Endothelial cell of umbilical vein (primary cell): ENCODE measurements at regions of chr3 and their contacts with region 1.

Region 1: DNA sequence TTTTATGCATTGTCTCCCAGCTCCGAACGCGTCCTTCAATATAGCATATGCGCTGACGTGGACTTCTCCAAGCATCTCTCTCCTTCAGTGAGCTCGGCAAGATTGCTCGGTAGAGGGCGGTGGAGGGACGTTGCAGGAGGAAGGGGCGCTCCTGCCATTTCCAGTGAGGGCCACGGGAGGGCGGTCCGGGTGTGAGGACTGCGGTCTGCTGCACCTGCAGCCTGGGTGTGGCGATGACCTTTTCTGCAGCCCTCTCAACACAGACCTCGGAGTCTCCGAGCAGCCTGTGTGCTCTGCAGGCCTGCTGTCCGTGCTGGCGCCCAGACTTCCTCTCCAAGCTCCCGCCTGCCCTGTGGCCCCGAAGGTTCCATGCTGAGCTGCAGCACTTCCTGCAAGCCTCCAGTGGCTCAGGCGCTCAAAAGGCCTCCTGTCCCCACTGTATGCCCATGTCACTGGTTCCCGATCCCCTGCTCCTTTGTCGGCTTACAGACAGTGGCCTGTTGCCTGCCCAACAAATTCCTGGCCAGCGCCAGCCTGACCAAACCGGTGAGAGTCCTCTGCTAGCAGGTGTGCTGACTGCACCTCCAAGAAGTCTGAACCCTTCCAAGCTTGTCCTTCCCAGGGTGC is 8.9 kb upstream of the RTP3 start:
- DNase-seq: peak; percentile 84
- H3K4me3 ChIP-seq: no peak overlapping the region
- H3K27ac ChIP-seq: no peak overlapping the region
- H3K4me1 ChIP-seq: peaks cover 2% of the 10 kb centered on the region
- H3K27me3 ChIP-seq: peaks cover 2 to 7% of the 10 kb centered on the region in 2 experiments
- CTCF ChIP-seq: peak; percentile 99 to 100
- POLR2A ChIP-seq: no peak

Region 2: DNA sequence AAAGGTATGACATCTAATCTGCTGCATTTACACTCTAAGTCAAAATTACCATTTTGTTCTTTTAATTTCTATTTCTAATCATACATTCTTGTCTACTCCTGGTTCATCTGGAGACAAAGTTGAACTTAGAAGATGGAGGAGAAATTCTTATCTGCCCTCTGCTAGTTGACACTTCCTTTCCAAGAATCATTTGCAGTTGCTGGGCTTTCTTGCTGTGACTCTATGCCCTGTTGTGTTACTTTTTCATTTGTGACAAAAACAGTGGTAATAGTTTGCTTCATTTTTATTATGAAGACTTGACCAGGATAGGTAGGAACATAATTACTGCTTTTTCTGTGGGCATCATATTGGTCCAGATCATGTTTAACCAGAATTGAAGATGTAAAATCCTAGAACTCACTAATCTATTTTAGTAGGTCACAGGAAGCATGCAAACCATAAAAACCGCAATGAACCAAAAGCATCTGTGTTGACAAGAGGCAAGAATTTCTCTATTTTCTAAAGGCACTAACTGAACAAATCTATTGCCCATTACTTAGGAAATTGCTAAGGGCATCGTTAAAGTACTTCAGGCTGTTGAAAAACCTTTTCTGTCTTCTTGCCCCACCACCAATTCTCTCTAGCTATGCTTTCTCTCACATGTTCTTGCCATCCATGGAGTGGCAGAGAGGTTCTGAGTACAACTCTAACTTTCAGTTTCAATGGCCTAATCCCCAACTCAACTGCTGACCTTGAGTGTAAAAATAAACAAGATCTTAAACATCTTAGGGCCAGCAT is 139.2 kb before region 1 on chr3:
- CTCF ChIA-PET with region 1: no interaction called
- POLR2A ChIA-PET with region 1: no interaction called
- dilution Hi-C with region 1: no loop called
- intact Hi-C with region 1: no loop called
- DNase-seq: no peak
- H3K4me3 ChIP-seq: no peak overlapping the region
- H3K27ac ChIP-seq: no peak overlapping the region
- H3K4me1 ChIP-seq: no peaks in the 10 kb centered on the region
- H3K27me3 ChIP-seq: peaks cover 4 to 8% of the 10 kb centered on the region in 2 experiments
- CTCF ChIP-seq: no peak
- POLR2A ChIP-seq: no peak

Region 3: GRCh38 chr3:46449755-46450552 is 38.9 kb before region 1 on chr3:
- CTCF ChIA-PET with region 1: interaction called, 15 read pairs
- POLR2A ChIA-PET with region 1: no interaction called
- dilution Hi-C with region 1: no loop called
- intact Hi-C with region 1: no loop called
- DNase-seq: no peak
- H3K4me3 ChIP-seq: no peak overlapping the region
- H3K27ac ChIP-seq: no peak overlapping the region
- H3K4me1 ChIP-seq: no peaks in the 10 kb centered on the region
- H3K27me3 ChIP-seq: peaks cover 0 to 8% of the 10 kb centered on the region in 2 experiments
- CTCF ChIP-seq: peak; percentile 62 to 65
- POLR2A ChIP-seq: no peak

Region 4: GRCh38 chr3:46538803-46539442 is 50.1 kb after region 1 on chr3:
- CTCF ChIA-PET with region 1: interaction called, 26 read pairs
- POLR2A ChIA-PET with region 1: no interaction called
- dilution Hi-C with region 1: no loop called
- intact Hi-C with region 1: no loop called
- DNase-seq: peak; percentile 11
- H3K4me3 ChIP-seq: no peak overlapping the region
- H3K27ac ChIP-seq: peak overlapping the region; percentile 35
- H3K4me1 ChIP-seq: peaks cover 18% of the 10 kb centered on the region
- H3K27me3 ChIP-seq: peaks cover 0 to 4% of the 10 kb centered on the region in 2 experiments
- CTCF ChIP-seq: no peak
- POLR2A ChIP-seq: no peak

Region 5: GRCh38 chr3:46566036-46566641 is 77.3 kb after region 1 on chr3 and contains the start of gene LRRC2:
- CTCF ChIA-PET with region 1: interaction called, 20 read pairs
- POLR2A ChIA-PET with region 1: no interaction called
- dilution Hi-C with region 1: no loop called
- intact Hi-C with region 1: no loop called
- DNase-seq: peak; percentile 33
- H3K4me3 ChIP-seq: peak within 1 kb of the TSS; percentile 40 to 72 (median 64)
- H3K27ac ChIP-seq: no peak within 1 kb of the TSS
- H3K4me1 ChIP-seq: peaks cover 10% of the 10 kb centered on the region
- H3K27me3 ChIP-seq: peaks cover 0 to 3% of the 10 kb centered on the region in 2 experiments
- CTCF ChIP-seq: no peak
- POLR2A ChIP-seq: no peak
- total RNA-seq, gene LRRC2: 0.39 and 0.73 TPM in 2 replicates

Region 6: GRCh38 chr3:46629551-46630517 is 141.0 kb after region 1 on chr3:
- CTCF ChIA-PET with region 1: interaction called, 260 read pairs
- POLR2A ChIA-PET with region 1: interaction called, 10 read pairs
- dilution Hi-C with region 1: no loop called
- intact Hi-C with region 1: loop called (anchors 1 kb)
- DNase-seq: peak; percentile 86
- H3K4me3 ChIP-seq: peak overlapping the region; percentile 15 to 47 (median 16)
- H3K27ac ChIP-seq: no peak overlapping the region
- H3K4me1 ChIP-seq: peaks cover 9% of the 10 kb centered on the region
- H3K27me3 ChIP-seq: peaks cover 4 to 6% of the 10 kb centered on the region in 2 experiments
- CTCF ChIP-seq: peak; percentile 99 to 100
- POLR2A ChIP-seq: peak; percentile 54

Region 7: DNA sequence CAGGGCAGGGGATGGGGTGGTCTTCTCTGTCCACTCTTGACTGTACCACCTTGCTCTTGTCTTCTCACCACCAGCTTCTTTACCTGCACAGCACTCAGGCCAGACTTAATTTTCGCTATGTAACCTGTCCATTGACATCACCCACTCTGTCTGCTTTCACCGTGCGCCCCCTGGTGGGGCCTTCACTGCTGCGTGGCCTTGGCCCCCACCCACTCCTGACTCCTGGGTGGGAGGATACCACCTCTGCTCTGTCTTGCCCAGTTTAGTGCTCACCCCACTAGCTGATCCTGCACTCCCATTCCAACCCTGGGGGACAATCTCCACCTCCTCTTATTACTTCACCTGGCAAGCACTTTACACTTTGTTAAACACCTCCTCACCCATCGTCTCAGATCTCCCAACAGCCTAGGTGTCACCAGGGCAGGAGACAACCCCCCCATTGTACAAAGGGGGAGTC is 406.4 kb after region 1 on chr3:
- CTCF ChIA-PET with region 1: no interaction called
- POLR2A ChIA-PET with region 1: no interaction called
- dilution Hi-C with region 1: no loop called
- intact Hi-C with region 1: loop called (anchors 10 kb)
- DNase-seq: peak; percentile 56
- H3K4me3 ChIP-seq: no peak overlapping the region
- H3K27ac ChIP-seq: no peak overlapping the region
- H3K4me1 ChIP-seq: peaks cover 6% of the 10 kb centered on the region
- H3K27me3 ChIP-seq: no peaks in the 10 kb centered on the region
- CTCF ChIP-seq: peak; percentile 77 to 89
- POLR2A ChIP-seq: no peak

Region 8: GRCh38 chr3:47057212-47057671 is 568.4 kb after region 1 on chr3:
- CTCF ChIA-PET with region 1: no interaction called
- POLR2A ChIA-PET with region 1: no interaction called
- dilution Hi-C with region 1: no loop called
- intact Hi-C with region 1: no loop called
- DNase-seq: no peak
- H3K4me3 ChIP-seq: no peak overlapping the region
- H3K27ac ChIP-seq: no peak overlapping the region
- H3K4me1 ChIP-seq: no peaks in the 10 kb centered on the region
- H3K27me3 ChIP-seq: no peaks in the 10 kb centered on the region
- CTCF ChIP-seq: no peak
- POLR2A ChIP-seq: no peak